Right ventricle myocardium superior (tissue), 1 donor: ENCODE measurements at regions of chr16 and their contacts with region 1.

Region 1: GRCh38 chr16:17277977-17278381 is 192.8 kb downstream of the XYLT1 start:
- DNase-seq: peak; percentile 52
- ATAC-seq: peak; percentile 78

Region 2: DNA sequence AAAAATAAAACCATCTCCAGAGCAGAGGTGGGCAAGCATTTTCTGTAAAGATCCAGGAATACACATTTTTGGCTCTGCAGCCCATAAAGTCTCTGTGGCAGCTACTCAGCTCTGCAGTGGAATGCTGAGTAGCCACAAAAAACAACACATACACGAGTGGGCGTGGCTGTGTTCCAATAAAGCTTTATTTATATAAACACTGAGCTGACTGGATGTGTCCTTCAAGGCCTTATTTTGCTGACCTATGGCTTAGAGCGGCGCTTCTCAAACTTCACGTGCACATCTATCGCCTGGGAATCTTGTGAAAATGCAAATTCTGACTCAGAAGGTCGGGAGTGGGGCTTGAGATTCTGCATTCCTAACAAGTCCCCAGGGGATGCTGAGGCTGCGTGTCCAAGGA is 153.0 kb after region 1 on chr16:
- intact Hi-C with region 1: no loop called
- DNase-seq: no peak
- ATAC-seq: no peak

Region 3: GRCh38 chr16:17467923-17468540 is 190.1 kb after region 1 on chr16:
- intact Hi-C with region 1: loop called (anchors 5 kb)
- DNase-seq: peak; percentile 74
- ATAC-seq: peak; percentile 81